GM10248 (cell line): ENCODE measurements at regions of chr2 and their contacts with region 1.

Region 1: GRCh38 chr2:3396920-3397559 is 17.5 kb downstream of the TRAPPC12 start:
- DNase-seq: no peak
- CTCF ChIP-seq: no peak

Region 2: DNA sequence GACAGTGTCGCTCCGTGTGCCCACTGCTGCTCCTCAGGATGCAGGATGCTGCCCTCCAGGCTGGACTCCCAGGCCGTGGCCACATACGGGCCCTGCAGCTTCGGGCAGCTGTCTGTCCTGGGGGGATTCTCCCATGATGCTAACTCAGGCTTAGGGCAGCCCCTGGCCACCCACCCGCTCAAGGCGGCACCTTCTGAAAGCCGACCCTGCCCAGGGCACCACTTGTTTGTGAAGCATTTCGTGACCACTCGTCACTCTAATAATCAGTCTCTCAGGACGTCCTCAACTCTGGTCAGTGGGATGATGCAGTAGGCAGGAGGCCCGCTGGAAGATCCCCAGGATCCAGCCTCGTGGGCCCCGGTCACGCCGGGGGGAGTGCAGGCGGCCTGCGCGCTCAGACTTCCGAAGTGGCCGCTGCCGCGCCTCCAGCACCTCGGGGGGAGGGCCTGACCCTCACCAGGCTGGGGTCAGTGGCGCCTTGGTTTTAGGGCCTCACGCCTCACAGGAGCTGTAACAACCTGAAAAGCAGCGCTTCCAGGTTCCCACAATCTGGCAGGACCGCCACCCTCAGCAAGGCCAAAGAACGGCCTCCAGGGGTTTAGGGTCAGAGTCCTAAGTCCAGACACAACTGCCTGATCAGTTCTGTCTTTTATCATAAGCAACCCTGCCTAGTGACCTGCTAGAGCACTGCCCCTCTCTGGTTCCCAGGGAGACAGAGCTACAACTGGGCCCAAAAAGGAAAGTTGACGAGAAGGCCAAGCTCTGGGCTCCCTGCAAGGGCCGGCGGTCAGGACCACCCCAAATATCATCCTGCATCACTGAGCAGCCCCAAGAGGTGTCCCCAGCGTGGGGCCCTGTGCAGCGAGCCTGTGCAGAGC is 72.4 kb before region 1 on chr2:
- CTCF ChIA-PET with region 1: no interaction called
- POLR2A ChIA-PET with region 1: no interaction called
- DNase-seq: no peak
- CTCF ChIP-seq: no peak

Region 3: GRCh38 chr2:3379647-3380534 is 17.1 kb before region 1 on chr2 and contains the start of gene TRAPPC12:
- CTCF ChIA-PET with region 1: interaction called, 30 read pairs
- POLR2A ChIA-PET with region 1: interaction called, 3 read pairs
- DNase-seq: peak; percentile 91
- CTCF ChIP-seq: peak; percentile 51

Region 4: DNA sequence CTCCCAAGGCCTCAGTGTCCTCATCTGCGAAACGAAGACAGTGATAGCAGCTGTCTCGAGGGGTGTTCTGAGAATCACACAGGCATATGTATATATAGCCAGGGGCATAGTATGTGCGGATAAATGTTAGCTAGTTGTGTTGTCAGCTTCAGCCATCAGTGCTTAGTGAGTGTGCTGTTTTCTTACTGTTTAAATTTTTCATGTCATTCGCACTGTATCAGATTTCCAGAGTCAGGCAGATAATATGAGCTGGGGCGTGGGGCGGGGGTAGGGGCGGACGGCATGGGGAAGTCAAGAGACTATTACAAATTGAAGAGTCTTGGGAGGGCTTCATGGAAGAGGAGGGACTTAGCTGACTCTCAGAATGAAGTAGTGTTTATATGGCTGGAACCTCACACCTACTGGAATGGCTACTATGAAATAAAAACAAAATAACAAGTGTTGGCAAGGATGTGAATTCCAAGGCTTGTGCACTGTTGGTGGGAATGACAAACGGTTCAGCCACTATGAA is 10.5 kb before region 1 on chr2:
- CTCF ChIA-PET with region 1: interaction called, 30 read pairs
- POLR2A ChIA-PET with region 1: no interaction called
- DNase-seq: no peak
- CTCF ChIP-seq: no peak